CD8-positive, alpha-beta T cell (primary cell): ENCODE measurements at regions of chr4 and their contacts with region 1.

Region 1: GRCh38 chr4:6942238-6942800 is 32.7 kb downstream of the TBC1D14 start:
- DNase-seq: peak in 8 of 9 experiments; percentile 26 to 75 (median 50)
- ATAC-seq: peak; percentile 81
- H3K4me3 ChIP-seq: peak overlapping the region; percentile 25 to 30
- H3K4me3 Mint-ChIP-seq: peak overlapping the region; percentile 79
- H3K27ac ChIP-seq: peak overlapping the region; percentile 18 to 72
- H3K27ac Mint-ChIP-seq: peak overlapping the region; percentile 92
- H3K4me1 ChIP-seq: peaks cover 60% of the 10 kb centered on the region
- H3K4me1 Mint-ChIP-seq: peaks cover 83% of the 10 kb centered on the region
- H3K27me3 ChIP-seq: no peaks in the 10 kb centered on the region
- H3K27me3 Mint-ChIP-seq: no peaks in the 10 kb centered on the region
- CTCF ChIP-seq: no peak

Region 2: DNA sequence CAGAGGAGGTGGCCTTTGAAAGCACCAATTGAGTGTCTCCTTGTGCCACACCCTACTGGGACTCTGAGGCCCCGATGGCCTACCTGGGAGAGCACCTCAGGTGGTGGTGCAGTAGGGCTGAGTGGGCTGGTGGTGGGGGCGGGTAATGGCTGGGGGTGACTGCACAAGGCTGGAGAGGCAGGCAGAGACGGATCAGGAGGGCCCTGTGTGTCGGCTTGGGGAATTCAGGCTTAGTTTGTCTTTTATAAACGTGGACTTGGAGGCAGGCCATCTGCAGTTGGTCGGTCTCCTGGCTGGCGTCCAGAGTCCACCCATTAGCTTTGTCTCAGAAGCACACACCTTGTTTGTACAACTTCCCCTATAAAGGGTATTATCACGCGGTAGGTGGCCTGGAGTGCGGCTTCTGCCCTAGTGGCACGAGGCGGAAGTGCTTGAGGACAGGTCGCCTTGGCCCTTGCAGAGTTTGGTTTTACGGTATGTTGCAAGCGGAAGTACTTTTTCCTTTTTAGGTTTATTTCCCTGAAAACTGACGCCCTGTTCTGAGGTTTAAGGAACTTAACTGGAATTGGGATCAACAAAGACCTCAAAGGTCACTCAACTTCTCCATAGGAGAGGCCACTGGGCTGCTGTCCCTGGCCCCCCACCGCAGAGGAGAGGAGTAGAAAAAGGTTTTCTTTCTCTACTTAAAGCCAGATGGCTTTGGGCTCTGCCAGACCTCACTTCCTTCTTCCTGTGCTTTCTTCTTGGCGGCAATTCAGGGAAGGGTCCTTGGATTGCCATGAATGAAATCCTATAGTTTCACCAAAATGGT is 24.7 kb before region 1 on chr4:
- CTCF ChIA-PET with region 1: interaction called, 8 read pairs
- POLR2A ChIA-PET with region 1: interaction called, 10 read pairs
- intact Hi-C with region 1: loop called (anchors 1 to 2 kb)
- DNase-seq: peak in 4 of 9 experiments; percentile 34 to 65 (median 56)
- ATAC-seq: peak; percentile 43
- H3K4me3 ChIP-seq: peak overlapping the region in 1 of 2 experiments; percentile 12
- H3K4me3 Mint-ChIP-seq: peak overlapping the region; percentile 52
- H3K27ac ChIP-seq: peak overlapping the region; percentile 34 to 72
- H3K27ac Mint-ChIP-seq: peak overlapping the region; percentile 94
- H3K4me1 ChIP-seq: peaks cover 51% of the 10 kb centered on the region
- H3K4me1 Mint-ChIP-seq: peaks cover 78% of the 10 kb centered on the region
- H3K27me3 ChIP-seq: no peaks in the 10 kb centered on the region
- H3K27me3 Mint-ChIP-seq: no peaks in the 10 kb centered on the region
- CTCF ChIP-seq: peak; percentile 40

Region 3: DNA sequence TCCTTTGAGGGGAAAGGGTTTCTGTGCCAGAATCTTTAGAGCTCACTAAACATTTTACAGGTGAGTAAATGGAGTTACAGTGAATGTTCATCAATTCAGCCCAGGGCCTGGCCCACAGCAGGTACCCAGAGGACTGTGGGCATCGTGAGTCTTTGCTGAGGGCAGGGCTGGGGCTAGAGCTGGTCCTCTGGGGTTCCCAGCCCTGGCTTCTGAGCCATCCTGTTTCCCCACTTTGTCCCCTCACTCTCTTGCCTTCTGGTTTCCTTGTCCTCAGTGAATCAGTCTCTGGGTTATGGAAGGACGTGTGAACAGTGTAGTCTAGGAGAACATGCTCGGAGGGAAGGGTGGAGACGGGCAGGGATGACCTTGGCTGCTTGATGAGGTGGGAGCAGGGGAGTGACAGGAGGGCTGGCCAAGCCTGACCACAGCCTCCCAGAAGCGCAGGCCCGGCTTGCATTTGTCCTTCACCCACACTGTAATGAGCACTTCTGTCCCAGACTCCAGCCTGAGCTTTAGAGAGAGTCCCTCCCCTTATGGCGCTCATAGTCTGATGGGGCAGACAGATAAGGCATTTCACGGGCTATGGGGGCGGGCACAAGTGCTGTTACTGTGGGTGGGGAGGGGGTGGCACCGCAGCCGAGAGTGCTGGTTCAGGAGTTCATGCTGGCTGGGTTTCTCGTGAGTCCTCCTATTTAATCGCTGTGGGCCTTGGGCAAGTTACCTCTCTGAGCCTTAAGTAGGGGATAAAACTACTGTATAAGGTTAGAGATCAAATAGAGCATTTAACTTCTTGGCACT is 15.4 kb before region 1 on chr4:
- CTCF ChIA-PET with region 1: interaction called, 9 read pairs
- POLR2A ChIA-PET with region 1: interaction called, 15 read pairs
- intact Hi-C with region 1: loop called in 1 of 2 experiments (anchors 1 kb)
- DNase-seq: peak; percentile 37 to 77 (median 65)
- ATAC-seq: peak; percentile 96
- H3K4me3 ChIP-seq: peak overlapping the region in 1 of 2 experiments; percentile 36
- H3K4me3 Mint-ChIP-seq: peak overlapping the region; percentile 75
- H3K27ac ChIP-seq: peak overlapping the region in 1 of 2 experiments; percentile 52
- H3K27ac Mint-ChIP-seq: peak overlapping the region; percentile 92
- H3K4me1 ChIP-seq: peaks cover 48% of the 10 kb centered on the region
- H3K4me1 Mint-ChIP-seq: peaks cover 84% of the 10 kb centered on the region
- H3K27me3 ChIP-seq: no peaks in the 10 kb centered on the region
- H3K27me3 Mint-ChIP-seq: no peaks in the 10 kb centered on the region
- CTCF ChIP-seq: no peak

Region 4: GRCh38 chr4:6974138-6974848 is 32.0 kb after region 1 on chr4:
- CTCF ChIA-PET with region 1: interaction called, 12 read pairs
- POLR2A ChIA-PET with region 1: no interaction called
- intact Hi-C with region 1: no loop called
- DNase-seq: peak; percentile 59 to 90 (median 85)
- ATAC-seq: peak; percentile 100
- H3K4me3 ChIP-seq: no peak overlapping the region
- H3K4me3 Mint-ChIP-seq: no peak overlapping the region
- H3K27ac ChIP-seq: no peak overlapping the region
- H3K27ac Mint-ChIP-seq: peak overlapping the region; percentile 18
- H3K4me1 ChIP-seq: peaks cover 8% of the 10 kb centered on the region
- H3K4me1 Mint-ChIP-seq: peaks cover 21% of the 10 kb centered on the region
- H3K27me3 ChIP-seq: no peaks in the 10 kb centered on the region
- H3K27me3 Mint-ChIP-seq: no peaks in the 10 kb centered on the region
- CTCF ChIP-seq: peak; percentile 85